ENCODE measurements at regions of chr1 and their contacts with region 1.

Region 1: DNA sequence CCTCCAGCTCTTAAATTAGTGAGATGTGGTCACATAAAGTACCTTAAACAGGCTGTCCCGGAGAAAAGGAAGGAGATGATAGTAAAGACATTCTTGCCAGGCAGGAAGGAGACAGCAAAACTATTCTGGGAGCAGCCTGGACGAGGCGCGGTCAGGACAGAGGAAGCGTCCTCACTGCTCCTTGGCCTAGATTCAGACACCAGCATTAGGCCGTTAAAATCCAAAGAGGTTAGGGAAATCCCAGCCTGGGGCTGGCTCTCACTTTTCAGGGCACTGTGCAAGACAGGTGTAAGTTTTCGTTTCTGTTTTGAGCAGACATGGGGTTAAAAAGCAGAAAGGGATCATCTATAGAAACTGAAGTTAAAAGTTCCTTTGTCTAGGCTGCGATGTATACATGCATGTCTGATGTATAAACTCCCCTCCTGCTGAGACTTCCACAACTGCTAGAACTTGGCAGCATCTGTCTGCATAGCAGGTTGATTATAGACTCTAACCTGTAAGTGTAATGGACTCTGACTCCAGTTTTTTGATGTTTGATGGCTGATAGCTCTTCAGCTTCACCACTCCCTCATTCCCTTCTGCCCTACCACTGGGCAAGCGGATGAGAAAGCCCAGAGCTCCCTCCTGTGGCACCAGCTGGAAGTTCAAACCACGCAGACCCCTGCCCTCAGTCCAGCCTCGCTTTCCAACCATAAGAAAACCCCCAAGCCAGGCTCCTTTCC is 21.5 kb downstream of the STPG1 start:
- DNase-seq: peak; percentile 80
- ATAC-seq: peak; percentile 73
- H3K4me3 Mint-ChIP-seq: peak overlapping the region; percentile 65
- H3K27ac Mint-ChIP-seq: peak overlapping the region; percentile 95
- H3K4me1 Mint-ChIP-seq: peaks cover 27% of the 10 kb centered on the region
- H3K27me3 Mint-ChIP-seq: no peaks in the 10 kb centered on the region

Region 2: DNA sequence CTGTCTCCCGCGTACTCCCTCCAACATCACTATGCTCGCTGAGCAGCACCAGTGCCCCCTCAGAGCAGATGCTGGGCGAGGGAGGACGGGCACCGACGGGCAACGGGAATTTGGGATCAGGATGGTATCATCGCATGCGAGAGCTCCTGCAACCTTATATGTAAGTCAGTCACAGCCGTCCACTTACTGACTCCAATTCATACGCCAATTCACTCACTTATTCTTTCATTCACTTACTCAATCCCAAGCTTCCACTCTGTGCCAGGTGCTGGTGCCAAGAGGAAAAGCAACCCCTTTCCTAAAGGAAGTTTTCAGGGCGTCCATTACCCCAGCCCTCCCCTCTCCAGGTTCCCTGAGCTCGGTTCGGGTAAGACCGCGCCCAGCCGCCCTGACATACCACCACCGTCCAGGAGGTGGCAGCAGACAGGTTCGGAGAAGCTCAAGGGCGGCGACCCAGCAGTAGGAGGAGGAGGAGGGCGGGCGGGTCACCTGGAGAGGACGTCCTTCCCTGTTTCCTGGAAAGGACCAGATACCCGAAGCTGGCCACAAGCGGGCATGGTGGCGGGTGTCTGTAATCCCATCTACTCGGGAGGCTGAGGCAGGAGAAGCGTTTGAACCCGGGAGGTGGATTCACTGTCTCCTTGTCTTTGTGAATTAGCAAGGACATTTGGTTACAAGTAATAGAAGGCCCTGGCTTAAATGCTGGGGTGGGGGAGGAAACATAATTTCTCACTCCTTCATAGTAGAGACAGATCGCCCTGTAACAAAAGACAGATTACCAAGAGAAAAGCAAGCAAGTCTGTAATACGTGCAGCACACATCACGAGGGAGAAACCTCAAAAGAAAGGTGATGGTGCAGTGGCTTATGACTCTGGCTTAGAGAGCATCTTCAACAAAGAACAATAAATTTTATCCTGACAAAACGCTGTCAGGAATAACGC is 241.5 kb before region 1 on chr1:
- CTCF ChIA-PET with region 1: interaction called, 99 read pairs
- DNase-seq: peak; percentile 93
- ATAC-seq: peak; percentile 97
- H3K4me3 Mint-ChIP-seq: peak overlapping the region; percentile 54
- H3K27ac Mint-ChIP-seq: no peak overlapping the region
- H3K4me1 Mint-ChIP-seq: peaks cover 20% of the 10 kb centered on the region
- H3K27me3 Mint-ChIP-seq: peaks cover 40% of the 10 kb centered on the region

Region 3: GRCh38 chr1:24209090-24209489 is 183.0 kb before region 1 on chr1:
- CTCF ChIA-PET with region 1: interaction called, 59 read pairs
- DNase-seq: no peak
- ATAC-seq: no peak
- H3K4me3 Mint-ChIP-seq: no peak overlapping the region
- H3K27ac Mint-ChIP-seq: no peak overlapping the region
- H3K4me1 Mint-ChIP-seq: no peaks in the 10 kb centered on the region
- H3K27me3 Mint-ChIP-seq: peaks cover 15% of the 10 kb centered on the region

Region 4: GRCh38 chr1:24360681-24361080 is 31.4 kb before region 1 on chr1:
- CTCF ChIA-PET with region 1: interaction called, 11 read pairs
- DNase-seq: no peak
- ATAC-seq: no peak
- H3K4me3 Mint-ChIP-seq: no peak overlapping the region
- H3K27ac Mint-ChIP-seq: no peak overlapping the region
- H3K4me1 Mint-ChIP-seq: peaks cover 18% of the 10 kb centered on the region
- H3K27me3 Mint-ChIP-seq: no peaks in the 10 kb centered on the region

Region 5: DNA sequence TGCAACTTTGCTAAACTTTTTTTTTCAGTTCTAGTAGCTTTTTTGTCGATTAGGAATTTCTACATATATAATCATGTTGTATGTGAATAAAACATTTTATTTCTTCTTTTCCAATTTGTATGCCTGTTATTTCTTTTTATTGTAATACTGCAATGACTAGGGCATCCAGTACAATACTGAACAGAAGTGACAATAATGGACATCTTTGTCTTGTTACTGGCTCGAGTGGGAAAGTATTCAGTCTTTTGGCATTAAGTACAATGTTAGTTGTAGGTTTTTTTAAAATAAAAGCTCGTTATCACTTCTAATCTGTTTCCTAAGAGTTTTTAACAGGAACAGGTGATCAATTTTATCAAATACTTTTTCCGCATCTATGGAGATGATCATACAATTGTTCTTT is 11.8 kb after region 1 on chr1:
- CTCF ChIA-PET with region 1: interaction called, 31 read pairs
- DNase-seq: no peak
- ATAC-seq: no peak
- H3K4me3 Mint-ChIP-seq: no peak overlapping the region
- H3K27ac Mint-ChIP-seq: no peak overlapping the region
- H3K4me1 Mint-ChIP-seq: no peaks in the 10 kb centered on the region
- H3K27me3 Mint-ChIP-seq: no peaks in the 10 kb centered on the region

Region 6: GRCh38 chr1:24526940-24527542 is 135.0 kb after region 1 on chr1:
- CTCF ChIA-PET with region 1: interaction called, 16 read pairs
- DNase-seq: peak; percentile 65
- ATAC-seq: peak; percentile 47
- H3K4me3 Mint-ChIP-seq: no peak overlapping the region
- H3K27ac Mint-ChIP-seq: no peak overlapping the region
- H3K4me1 Mint-ChIP-seq: peaks cover 6% of the 10 kb centered on the region
- H3K27me3 Mint-ChIP-seq: no peaks in the 10 kb centered on the region

Region 7: DNA sequence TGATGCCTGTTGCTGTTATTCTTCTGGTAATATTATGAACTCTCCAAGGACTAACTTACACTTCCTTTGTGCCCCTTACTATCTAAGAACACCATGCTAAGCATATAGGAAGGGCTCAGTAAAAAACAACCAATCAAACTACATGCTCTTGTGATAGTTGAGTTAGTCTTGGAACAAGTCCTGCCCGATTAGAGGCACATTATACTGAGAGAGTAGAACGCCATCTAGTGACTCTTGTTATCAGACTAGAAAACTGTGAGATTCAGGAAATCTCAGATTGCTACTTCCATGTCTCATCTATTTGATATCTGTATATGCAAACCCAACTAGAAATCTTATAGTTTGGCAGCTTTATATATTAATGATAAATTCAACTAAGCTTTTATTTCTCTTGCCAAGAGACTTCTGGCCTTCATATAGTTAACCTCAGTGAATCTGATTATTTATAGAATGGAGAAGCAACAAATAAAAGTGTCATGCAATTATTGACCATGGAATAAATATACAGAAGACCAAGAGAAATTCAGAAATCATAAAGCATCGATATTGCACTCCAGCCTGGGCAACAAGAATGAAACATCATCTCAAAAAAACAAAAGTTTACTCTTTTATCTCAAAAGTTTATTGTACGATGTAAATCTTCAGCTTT is 243.3 kb after region 1 on chr1:
- CTCF ChIA-PET with region 1: interaction called, 17 read pairs
- DNase-seq: no peak
- ATAC-seq: peak; percentile 79
- H3K4me3 Mint-ChIP-seq: no peak overlapping the region
- H3K27ac Mint-ChIP-seq: no peak overlapping the region
- H3K4me1 Mint-ChIP-seq: peaks cover 6% of the 10 kb centered on the region
- H3K27me3 Mint-ChIP-seq: peaks cover 32% of the 10 kb centered on the region

Measured in activated CD8-positive, alpha-beta memory T cell treated with anti-CD3 and anti-CD28 coated beads, Interleukin-2, amount 10 ng/mL, durations not matched to agents 7 days and 5 days (primary cell).